GM12878 (cell line): ENCODE measurements at regions of chr13 and their contacts with region 1.

Region 1: GRCh38 chr13:99425485-99426341 is 75.6 kb upstream of the TM9SF2 start:
- DNase-seq: peak; percentile 90
- ATAC-seq: peak; percentile 71
- H3K4me3 ChIP-seq: peak overlapping the region; percentile 10
- H3K27ac ChIP-seq: peak overlapping the region; percentile 100
- H3K4me1 ChIP-seq: peaks cover 62% of the 10 kb centered on the region
- H3K27me3 ChIP-seq: no peaks in the 10 kb centered on the region
- CTCF ChIP-seq: no peak
- EP300 ChIP-seq: peak; percentile 55 to 89; a peak in 3 of 4 replicates
- POLR2A ChIP-seq: no peak
- RAD21 ChIP-seq: peak; percentile 18; the same call in 1 of the 2 replicates

Region 2: GRCh38 chr13:98576963-98577822 is 848.5 kb before region 1 on chr13 and contains the start of gene STK24:
- CTCF ChIA-PET with region 1: no interaction called
- POLR2A ChIA-PET with region 1: no interaction called
- RAD21 ChIA-PET with region 1: no interaction called
- SMC1A ChIA-PET with region 1: no interaction called
- in situ Hi-C with region 1: no loop called
- intact Hi-C with region 1: loop called (anchors 10 kb)
- DNase-seq: no peak
- ATAC-seq: peak; percentile 45
- H3K4me3 ChIP-seq: peak within 1 kb of the TSS; percentile 87
- H3K27ac ChIP-seq: peak within 1 kb of the TSS; percentile 81
- H3K4me1 ChIP-seq: peaks cover 12% of the 10 kb centered on the region
- H3K27me3 ChIP-seq: no peaks in the 10 kb centered on the region
- CTCF ChIP-seq: peak in 1 of 3 experiments; percentile 24; a peak in 1 of 6 replicates
- EP300 ChIP-seq: no peak
- POLR2A ChIP-seq: peak; percentile 78
- RAD21 ChIP-seq: no peak
- polyA plus RNA-seq, gene STK24: 9.9 to 19.1 TPM

Region 3: GRCh38 chr13:99886706-99887105 is 461.0 kb after region 1 on chr13:
- CTCF ChIA-PET with region 1: no interaction called
- POLR2A ChIA-PET with region 1: no interaction called
- RAD21 ChIA-PET with region 1: no interaction called
- SMC1A ChIA-PET with region 1: no interaction called
- in situ Hi-C with region 1: no loop called
- intact Hi-C with region 1: no loop called
- DNase-seq: no peak
- ATAC-seq: no peak
- H3K4me3 ChIP-seq: no peak overlapping the region
- H3K27ac ChIP-seq: no peak overlapping the region
- H3K4me1 ChIP-seq: peaks cover 8% of the 10 kb centered on the region
- H3K27me3 ChIP-seq: peaks cover 0 to 2% of the 10 kb centered on the region in 2 experiments; a peak in 1 of 4 replicates
- CTCF ChIP-seq: no peak
- EP300 ChIP-seq: no peak
- POLR2A ChIP-seq: no peak
- RAD21 ChIP-seq: no peak